ENCODE measurements at regions of chr6 and their contacts with region 1.

Region 1: DNA sequence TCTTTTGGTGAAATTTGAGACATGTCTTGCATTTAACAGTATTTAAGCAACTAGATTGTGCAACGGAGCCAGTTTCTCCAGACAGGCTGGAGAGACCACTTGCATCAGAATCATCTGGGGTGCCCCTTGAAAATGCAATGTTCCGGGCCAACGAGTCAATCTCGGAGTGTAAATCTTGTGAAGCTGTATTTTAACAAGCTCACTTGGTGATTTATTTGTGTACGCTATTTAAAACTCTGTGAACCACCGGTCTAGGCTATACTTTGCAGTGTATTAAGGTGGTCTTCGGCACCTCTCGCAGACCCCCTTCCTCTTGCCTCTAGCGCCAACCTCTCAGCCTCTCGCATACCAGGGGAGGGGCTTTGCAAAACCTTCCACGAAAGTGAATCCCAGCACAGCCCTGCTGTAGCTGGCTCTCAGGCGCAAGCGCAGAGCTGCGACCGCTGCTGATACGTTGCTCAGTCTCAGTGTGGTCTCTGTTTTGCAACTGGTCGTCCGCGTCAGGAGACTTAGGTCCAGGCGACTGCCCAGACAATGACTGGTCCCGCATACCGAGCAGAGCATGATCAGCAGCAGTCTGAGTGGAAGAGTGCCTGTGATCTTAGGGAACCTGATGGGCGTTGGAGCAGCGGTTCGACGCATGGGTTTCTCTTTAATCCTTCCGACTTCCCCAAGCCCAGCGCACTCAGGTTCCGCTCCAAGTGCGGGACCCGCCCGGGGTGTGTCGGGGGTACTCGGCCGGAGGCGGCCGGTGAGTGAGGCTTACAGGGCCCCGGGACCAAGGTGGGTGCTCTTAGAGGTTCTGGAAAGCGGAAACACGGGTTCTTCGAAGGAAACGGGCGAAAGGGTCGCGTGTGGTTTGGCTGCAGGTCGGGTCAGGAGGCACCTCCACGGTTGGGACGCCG is at the start of gene ZNF391:
- DNase-seq: peak; percentile 88
- H3K4me3 Mint-ChIP-seq: peak within 1 kb of the TSS; percentile 96
- H3K27ac Mint-ChIP-seq: peak within 1 kb of the TSS; percentile 87
- H3K4me1 Mint-ChIP-seq: peaks cover 4% of the 10 kb centered on the region
- H3K27me3 Mint-ChIP-seq: peaks cover 19% of the 10 kb centered on the region
- total RNA-seq, gene ZNF391: 0.70 and 0.92 TPM in 2 replicates

Region 2: DNA sequence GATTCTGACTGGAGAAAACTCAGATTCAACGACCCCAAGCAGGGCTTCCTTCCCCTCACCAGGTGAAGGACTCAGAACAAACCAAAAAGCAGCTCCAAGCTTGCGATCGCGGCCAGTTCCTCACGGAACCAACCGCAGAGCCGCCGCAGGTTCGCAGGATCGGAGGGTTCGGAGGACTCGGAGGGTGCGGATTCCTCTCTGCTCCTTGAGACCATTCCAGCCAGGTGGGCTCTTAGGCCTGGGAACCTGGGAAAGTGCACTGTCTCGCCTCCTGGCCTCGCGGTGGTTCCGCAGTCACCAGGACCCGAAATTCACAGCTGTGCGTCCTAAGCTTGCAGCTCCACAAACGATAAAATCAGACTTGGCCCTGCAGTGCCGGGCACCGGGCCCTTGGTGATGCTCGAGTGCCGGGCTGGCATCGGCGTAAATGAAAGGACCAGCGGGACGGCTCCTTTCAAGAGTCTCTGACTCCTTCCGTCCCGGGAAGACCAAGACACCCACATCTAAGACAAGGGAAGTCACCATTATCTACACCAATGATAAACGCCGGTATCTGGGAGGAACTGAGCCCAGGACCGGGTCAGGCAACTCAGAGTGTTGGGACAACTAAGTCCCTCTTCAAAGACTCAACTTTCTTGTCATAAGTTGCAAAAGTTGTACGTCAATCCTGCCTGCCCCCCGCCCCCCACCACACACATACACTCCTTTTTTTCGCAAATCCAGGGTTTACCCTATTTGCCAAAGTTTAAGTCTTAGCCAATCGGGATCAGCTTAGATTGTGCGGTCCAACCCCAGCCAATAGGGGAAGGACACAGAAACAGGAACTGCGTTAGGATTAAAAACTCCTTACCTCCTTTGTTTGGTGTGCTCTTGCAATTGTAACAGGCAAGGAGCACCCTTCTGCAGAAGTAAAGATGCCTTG is 210.8 kb before region 1 on chr6:
- intact Hi-C with region 1: loop called (anchors 5 kb)
- DNase-seq: peak; percentile 92
- H3K4me3 Mint-ChIP-seq: peak overlapping the region; percentile 95
- H3K27ac Mint-ChIP-seq: peak overlapping the region; percentile 93
- H3K4me1 Mint-ChIP-seq: peaks cover 17% of the 10 kb centered on the region
- H3K27me3 Mint-ChIP-seq: peaks cover 33% of the 10 kb centered on the region

Region 3: GRCh38 chr6:27374824-27375612 is 13.5 kb before region 1 on chr6:
- intact Hi-C with region 1: loop called (anchors 2 kb)
- DNase-seq: peak; percentile 84
- H3K4me3 Mint-ChIP-seq: peak overlapping the region; percentile 82
- H3K27ac Mint-ChIP-seq: no peak overlapping the region
- H3K4me1 Mint-ChIP-seq: peaks cover 16% of the 10 kb centered on the region
- H3K27me3 Mint-ChIP-seq: peaks cover 8% of the 10 kb centered on the region

Region 4: GRCh38 chr6:27472617-27473400 is 84.3 kb after region 1 on chr6 and contains the start of gene ZNF184:
- intact Hi-C with region 1: loop called (anchors 2 kb)
- DNase-seq: peak; percentile 97
- H3K4me3 Mint-ChIP-seq: peak within 1 kb of the TSS; percentile 89
- H3K27ac Mint-ChIP-seq: peak within 1 kb of the TSS; percentile 98
- H3K4me1 Mint-ChIP-seq: peaks cover 41% of the 10 kb centered on the region
- H3K27me3 Mint-ChIP-seq: peaks cover 2% of the 10 kb centered on the region
- total RNA-seq, gene ZNF184: 7.9 and 8.2 TPM in 2 replicates

Region 5: GRCh38 chr6:27893059-27893835 is 504.7 kb after region 1 on chr6:
- intact Hi-C with region 1: no loop called
- DNase-seq: peak; percentile 98
- H3K4me3 Mint-ChIP-seq: no peak overlapping the region
- H3K27ac Mint-ChIP-seq: no peak overlapping the region
- H3K4me1 Mint-ChIP-seq: peaks cover 45% of the 10 kb centered on the region
- H3K27me3 Mint-ChIP-seq: no peaks in the 10 kb centered on the region

Measured in activated CD4-positive, alpha-beta T cell treated with anti-CD3 and anti-CD28 coated beads, Interleukin-2, amount 10 ng/mL, durations not matched to agents 24 days and 14 days (primary cell).